Endothelial cell of umbilical vein (primary cell): ENCODE measurements at regions of chr20 and their contacts with region 1.

Region 1: DNA sequence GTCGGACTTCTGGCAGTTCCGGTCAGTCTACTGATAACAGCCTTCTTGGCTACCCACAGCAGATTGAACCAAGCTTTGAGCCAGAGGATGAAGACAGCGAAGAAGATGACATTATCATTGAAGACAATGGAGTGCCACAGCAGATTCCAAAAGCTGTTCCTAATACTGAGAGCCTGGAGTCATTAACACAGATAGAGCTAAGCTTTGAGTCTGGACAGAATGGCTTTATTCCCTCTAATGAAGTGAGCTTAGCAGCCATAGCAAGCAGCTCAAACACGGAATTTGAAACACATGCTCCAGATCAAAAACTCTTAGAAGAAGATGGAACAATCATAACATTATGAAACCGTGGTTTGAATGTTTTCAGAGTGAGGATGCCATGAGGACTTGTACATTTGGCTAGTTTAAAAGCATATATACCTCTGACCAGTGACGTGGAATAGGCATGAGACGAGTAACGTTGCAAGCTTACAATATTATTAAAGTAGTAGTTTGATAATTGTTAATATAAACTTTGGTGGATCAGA is 18.8 kb downstream of the PARD6B start:
- DNase-seq: no peak
- H3K4me3 ChIP-seq: no peak overlapping the region
- H3K27ac ChIP-seq: no peak overlapping the region
- H3K4me1 ChIP-seq: no peaks in the 10 kb centered on the region
- H3K27me3 ChIP-seq: peaks cover 3 to 8% of the 10 kb centered on the region in 2 experiments
- CTCF ChIP-seq: no peak
- POLR2A ChIP-seq: no peak

Region 2: GRCh38 chr20:50594591-50595432 is 155.4 kb before region 1 on chr20:
- CTCF ChIA-PET with region 1: interaction called, 19 read pairs
- POLR2A ChIA-PET with region 1: no interaction called
- dilution Hi-C with region 1: no loop called
- intact Hi-C with region 1: loop called (anchors 10 kb)
- DNase-seq: no peak
- H3K4me3 ChIP-seq: no peak overlapping the region
- H3K27ac ChIP-seq: no peak overlapping the region
- H3K4me1 ChIP-seq: peaks cover 10% of the 10 kb centered on the region
- H3K27me3 ChIP-seq: peaks cover 0 to 2% of the 10 kb centered on the region in 2 experiments
- CTCF ChIP-seq: no peak
- POLR2A ChIP-seq: no peak

Region 3: DNA sequence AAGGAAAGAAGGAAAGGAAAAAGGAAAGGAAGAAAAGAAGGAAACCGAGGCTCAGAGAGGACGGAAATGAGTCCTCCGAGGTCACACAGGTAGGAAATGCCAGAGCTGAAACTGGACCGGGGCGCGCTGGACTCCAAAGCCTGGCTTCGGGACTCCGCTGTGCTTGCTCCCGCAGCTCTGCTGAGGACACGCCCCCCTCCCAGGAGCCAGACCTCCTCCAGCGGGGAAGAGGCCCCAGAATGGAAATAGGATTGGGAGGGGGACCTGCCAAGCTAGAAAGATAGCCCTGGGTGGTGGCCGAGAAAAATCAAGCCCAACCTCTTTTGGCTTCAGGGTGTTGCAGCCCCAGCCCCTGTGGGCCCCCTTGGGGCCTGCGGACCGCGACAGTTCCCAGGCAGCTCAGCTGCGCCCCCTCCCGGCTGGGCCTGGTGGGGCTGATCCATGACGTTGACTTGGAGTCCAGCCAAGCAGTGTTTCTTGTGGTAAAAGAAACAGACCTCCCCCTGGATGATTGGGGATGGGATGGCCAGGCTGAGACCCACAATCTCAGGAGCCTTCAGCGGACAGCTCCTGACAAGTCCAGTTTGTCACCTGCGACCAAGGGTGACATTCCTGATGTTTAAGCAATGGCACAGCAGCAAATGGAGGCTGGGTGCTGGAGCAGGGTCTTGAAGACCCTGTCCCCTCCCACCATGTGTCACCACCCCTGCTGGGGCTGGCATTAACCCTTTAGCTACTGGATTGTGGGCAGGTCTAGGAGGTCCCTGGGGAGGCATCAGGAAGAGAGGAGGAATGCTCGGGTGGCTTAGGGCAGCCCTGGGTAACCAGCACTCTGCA is 114.3 kb before region 1 on chr20:
- CTCF ChIA-PET with region 1: interaction called, 181 read pairs
- POLR2A ChIA-PET with region 1: no interaction called
- dilution Hi-C with region 1: no loop called
- intact Hi-C with region 1: no loop called
- DNase-seq: peak; percentile 54
- H3K4me3 ChIP-seq: no peak overlapping the region
- H3K27ac ChIP-seq: no peak overlapping the region
- H3K4me1 ChIP-seq: no peaks in the 10 kb centered on the region
- H3K27me3 ChIP-seq: no peaks in the 10 kb centered on the region
- CTCF ChIP-seq: peak; percentile 98 to 99
- POLR2A ChIP-seq: no peak

Region 4: DNA sequence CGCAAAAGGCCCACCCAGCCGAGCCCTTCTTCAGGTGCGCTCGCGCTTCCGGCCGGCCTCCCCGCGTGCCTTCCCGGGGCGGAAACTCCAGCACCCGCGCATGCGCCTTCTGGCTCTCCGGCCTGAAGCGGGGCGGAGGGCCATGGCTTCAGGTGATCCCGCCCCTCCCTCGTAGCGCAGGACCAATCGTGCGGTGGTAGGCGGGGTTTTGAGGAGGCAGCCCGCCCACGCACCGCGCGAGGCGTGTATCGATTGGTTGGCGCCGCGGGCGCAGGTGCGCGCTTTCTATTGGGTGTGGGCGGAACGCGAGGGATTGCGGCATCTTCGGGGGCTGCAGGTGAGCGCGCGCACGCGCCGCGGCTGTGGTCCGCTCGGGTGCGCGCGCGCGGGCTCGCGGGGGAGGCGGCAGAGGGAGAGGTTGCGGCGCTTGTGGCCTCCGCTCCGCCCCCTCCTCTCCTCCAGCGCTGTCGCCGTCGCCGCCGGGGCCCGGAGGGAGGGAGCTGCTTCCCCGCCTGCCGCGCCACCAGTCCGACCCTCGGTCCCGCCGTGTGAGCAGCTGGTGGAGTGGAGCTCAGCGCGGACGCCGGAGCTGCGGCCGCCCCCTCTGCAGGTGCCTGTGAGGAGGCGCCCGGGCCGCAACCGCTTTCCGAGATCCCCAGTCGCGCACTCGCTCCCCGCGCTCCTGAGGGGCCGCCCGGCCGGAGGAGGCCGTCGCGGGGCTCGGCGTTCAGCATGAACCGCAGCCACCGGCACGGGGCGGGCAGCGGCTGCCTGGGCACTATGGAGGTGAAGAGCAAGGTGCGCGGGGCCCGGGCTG is 18.9 kb before region 1 on chr20 and contains the start of gene PARD6B:
- CTCF ChIA-PET with region 1: interaction called, 34 read pairs
- POLR2A ChIA-PET with region 1: no interaction called
- dilution Hi-C with region 1: no loop called
- intact Hi-C with region 1: no loop called
- DNase-seq: peak; percentile 84
- H3K4me3 ChIP-seq: peak within 1 kb of the TSS; percentile 38 to 56 (median 45)
- H3K27ac ChIP-seq: no peak within 1 kb of the TSS
- H3K4me1 ChIP-seq: no peaks in the 10 kb centered on the region
- H3K27me3 ChIP-seq: peaks cover 18 to 24% of the 10 kb centered on the region in 2 experiments
- CTCF ChIP-seq: no peak
- POLR2A ChIP-seq: no peak
- total RNA-seq, gene PARD6B: 0.07 TPM in 1 of 2 replicates, not detected in the other

Region 5: GRCh38 chr20:50776122-50776817 is 26.1 kb after region 1 on chr20:
- CTCF ChIA-PET with region 1: interaction called, 12 read pairs
- POLR2A ChIA-PET with region 1: no interaction called
- dilution Hi-C with region 1: no loop called
- intact Hi-C with region 1: no loop called
- DNase-seq: no peak
- H3K4me3 ChIP-seq: no peak overlapping the region
- H3K27ac ChIP-seq: no peak overlapping the region
- H3K4me1 ChIP-seq: no peaks in the 10 kb centered on the region
- H3K27me3 ChIP-seq: peaks cover 3% of the 10 kb centered on the region in 2 experiments
- CTCF ChIP-seq: no peak
- POLR2A ChIP-seq: no peak

Region 6: DNA sequence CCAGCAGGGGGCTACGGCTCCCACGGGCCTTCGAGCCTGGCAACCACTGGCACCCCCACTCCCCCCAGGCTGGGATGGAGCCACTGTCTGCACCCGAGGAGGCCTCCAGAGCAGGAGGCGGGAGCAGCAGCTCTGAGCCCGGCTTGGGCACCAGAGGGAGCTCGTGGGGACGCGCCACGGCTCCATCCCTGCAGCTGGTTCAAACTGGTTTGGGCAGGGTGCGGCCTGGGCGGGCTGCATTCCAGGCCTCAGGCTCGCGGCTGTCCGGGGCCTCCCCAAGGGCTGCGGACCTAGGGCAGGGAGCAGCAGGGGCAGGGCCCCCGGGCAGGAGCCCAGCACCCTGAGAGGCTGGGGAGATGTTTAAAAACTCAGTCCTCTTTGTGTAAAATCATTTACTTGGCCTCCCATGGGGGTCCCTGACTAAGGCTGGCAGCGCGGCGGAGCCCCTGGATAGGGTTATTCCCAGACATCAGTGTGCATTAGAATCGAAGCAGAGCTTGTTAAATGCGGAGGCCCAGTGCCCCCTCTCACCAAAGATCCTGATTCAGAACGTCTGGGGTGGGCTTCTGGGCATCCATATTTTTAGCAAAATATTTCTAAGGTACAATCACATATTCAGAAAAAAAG is 40.6 kb after region 1 on chr20:
- CTCF ChIA-PET with region 1: interaction called, 13 read pairs
- POLR2A ChIA-PET with region 1: no interaction called
- dilution Hi-C with region 1: no loop called
- intact Hi-C with region 1: no loop called
- DNase-seq: peak; percentile 73
- H3K4me3 ChIP-seq: no peak overlapping the region
- H3K27ac ChIP-seq: peak overlapping the region; percentile 64
- H3K4me1 ChIP-seq: peaks cover 10% of the 10 kb centered on the region
- H3K27me3 ChIP-seq: peaks cover 0 to 4% of the 10 kb centered on the region in 2 experiments
- CTCF ChIP-seq: peak; percentile 87 to 97
- POLR2A ChIP-seq: peak; percentile 71